OCI-LY7 (cell line): ENCODE measurements at regions of chr1 and their contacts with region 1.

Region 1: GRCh38 chr1:43220905-43221778 is 48.6 kb upstream of the TMEM125 start:
- DNase-seq: peak; percentile 84
- H3K4me3 ChIP-seq: peak overlapping the region; percentile 18
- H3K27ac ChIP-seq: peak overlapping the region; percentile 73
- H3K4me1 ChIP-seq: peaks cover 23% of the 10 kb centered on the region
- CTCF ChIP-seq: no peak

Region 2: GRCh38 chr1:43481491-43481890 is 260.3 kb after region 1 on chr1:
- CTCF ChIA-PET with region 1: no interaction called
- POLR2A ChIA-PET with region 1: interaction called, 12 read pairs
- intact Hi-C with region 1: no loop called
- DNase-seq: no peak
- H3K4me3 ChIP-seq: no peak overlapping the region
- H3K27ac ChIP-seq: no peak overlapping the region
- H3K4me1 ChIP-seq: no peaks in the 10 kb centered on the region
- CTCF ChIP-seq: no peak